AG04450 (cell line): ENCODE measurements at regions of chr20 and their contacts with region 1.

Region 1: GRCh38 chr20:53677447-53678314 is 84.0 kb upstream of the ZNF217 start:
- DNase-seq: no peak
- H3K4me3 ChIP-seq: no peak overlapping the region
- H3K27ac ChIP-seq: peak overlapping the region; percentile 24
- H3K27me3 ChIP-seq: no peaks in the 10 kb centered on the region
- CTCF ChIP-seq: no peak

Region 2: DNA sequence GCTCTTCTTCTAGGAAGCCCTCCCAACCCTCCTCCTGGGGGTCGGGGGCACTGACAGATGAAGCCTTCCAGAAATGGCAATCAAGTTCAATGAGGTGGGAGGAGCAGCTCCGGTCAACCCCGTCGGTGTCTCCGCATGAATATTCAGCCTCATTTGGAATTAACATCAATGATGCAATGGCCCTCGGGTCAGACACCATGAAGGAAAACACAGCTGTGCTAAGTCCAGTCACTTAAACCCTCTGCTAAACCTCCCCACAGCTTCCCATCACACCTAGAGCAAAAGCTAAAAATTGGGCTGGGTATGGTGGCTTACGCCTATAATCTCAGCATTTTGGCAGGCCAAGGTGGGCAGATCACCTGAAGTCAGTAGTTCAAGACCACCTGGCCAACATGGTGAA is 120.5 kb before region 1 on chr20:
- CTCF ChIA-PET with region 1: no interaction called
- POLR2A ChIA-PET with region 1: interaction called, 11 read pairs
- DNase-seq: no peak
- H3K4me3 ChIP-seq: no peak overlapping the region
- H3K27ac ChIP-seq: no peak overlapping the region
- H3K27me3 ChIP-seq: no peaks in the 10 kb centered on the region
- CTCF ChIP-seq: no peak